Vagina (tissue), 2 donors: ENCODE measurements at regions of chr3 and their contacts with region 1.

Region 1: GRCh38 chr3:115217678-115218451 is 70.8 kb upstream of the ZBTB20 start:
- DNase-seq: no peak
- H3K4me3 ChIP-seq: no peak overlapping the region
- H3K27ac ChIP-seq: no peak overlapping the region
- H3K4me1 ChIP-seq: peaks cover 7% of the 10 kb centered on the region
- H3K27me3 ChIP-seq: no peaks in the 10 kb centered on the region
- CTCF ChIP-seq: peak in 1 of 3 experiments; percentile 58
- POLR2A ChIP-seq: no peak

Region 2: GRCh38 chr3:115071611-115072010 is 146.3 kb before region 1 on chr3:
- intact Hi-C with region 1: no loop called
- DNase-seq: no peak
- H3K4me3 ChIP-seq: no peak overlapping the region
- H3K27ac ChIP-seq: no peak overlapping the region
- H3K4me1 ChIP-seq: peaks cover 13% of the 10 kb centered on the region
- H3K27me3 ChIP-seq: no peaks in the 10 kb centered on the region
- CTCF ChIP-seq: no peak
- POLR2A ChIP-seq: no peak

Region 3: GRCh38 chr3:115380883-115381572 is 163.2 kb after region 1 on chr3:
- intact Hi-C with region 1: no loop called
- DNase-seq: no peak
- H3K4me3 ChIP-seq: no peak overlapping the region
- H3K27ac ChIP-seq: no peak overlapping the region
- H3K4me1 ChIP-seq: no peaks in the 10 kb centered on the region
- H3K27me3 ChIP-seq: no peaks in the 10 kb centered on the region
- CTCF ChIP-seq: no peak
- POLR2A ChIP-seq: no peak

Region 4: DNA sequence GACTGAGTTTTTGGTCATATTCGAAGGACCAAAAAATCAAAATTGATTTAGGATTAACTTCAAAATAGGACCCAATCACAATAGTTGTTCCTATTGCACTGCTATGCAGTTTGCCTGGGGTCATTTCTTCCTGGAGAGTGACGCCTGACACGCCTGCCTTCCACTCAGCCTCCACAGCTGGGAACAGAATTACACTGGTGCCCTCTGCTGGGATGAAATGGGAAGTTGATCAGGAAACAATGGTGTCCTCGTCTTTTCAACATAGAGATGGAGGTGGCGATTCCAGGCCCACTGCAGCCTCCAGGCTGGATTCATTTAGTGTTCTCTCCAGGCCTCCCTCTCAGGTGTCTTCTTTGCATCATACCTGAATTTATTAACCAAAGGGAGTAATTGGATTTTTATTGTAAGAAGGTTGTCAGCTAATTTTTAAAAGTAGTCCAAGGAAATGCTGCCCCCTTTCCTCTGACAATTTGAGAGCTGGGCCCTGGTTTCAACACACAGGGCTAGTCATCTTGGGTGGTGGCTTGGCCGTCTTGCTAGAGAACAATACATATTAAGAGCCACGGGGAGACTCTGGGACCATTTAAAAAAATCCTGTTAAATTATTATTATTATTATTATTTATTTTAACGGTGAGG is 475.1 kb after region 1 on chr3:
- intact Hi-C with region 1: loop called (anchors 5 kb)
- DNase-seq: no peak
- H3K4me3 ChIP-seq: no peak overlapping the region
- H3K27ac ChIP-seq: no peak overlapping the region
- H3K4me1 ChIP-seq: no peaks in the 10 kb centered on the region
- H3K27me3 ChIP-seq: no peaks in the 10 kb centered on the region
- CTCF ChIP-seq: peak; percentile 41 to 89 (median 88)
- POLR2A ChIP-seq: no peak